Naive thymus-derived CD4-positive, alpha-beta T cell (primary cell): ENCODE measurements at regions of chr1 and their contacts with region 1.

Region 1: GRCh38 chr1:172532700-172533509 is at the start of gene SUCO:
- DNase-seq: peak; percentile 97 to 100 (median 99)
- ATAC-seq: peak; percentile 90
- H3K4me3 ChIP-seq: peak within 1 kb of the TSS; percentile 98
- H3K4me3 Mint-ChIP-seq: peak within 1 kb of the TSS; percentile 90 to 100 (median 98)
- H3K27ac ChIP-seq: peak within 1 kb of the TSS; percentile 99
- H3K27ac Mint-ChIP-seq: peak within 1 kb of the TSS; percentile 99 to 100 (median 100)
- H3K4me1 ChIP-seq: peaks cover 30 to 34% of the 10 kb centered on the region in 2 donors
- H3K4me1 Mint-ChIP-seq: peaks cover 32 to 60% (median 49%) of the 10 kb centered on the region in 7 donors
- H3K27me3 ChIP-seq: no peaks in the 10 kb centered on the region
- H3K27me3 Mint-ChIP-seq: peaks cover 0 to 16% (median 4%) of the 10 kb centered on the region in 5 donors
- total RNA-seq, gene SUCO: 52.0 to 95.0 (median 77.0) TPM

Region 2: GRCh38 chr1:171741872-171742576 is 790.9 kb before region 1 on chr1 and contains the start of gene VAMP4:
- CTCF ChIA-PET with region 1: no interaction called
- POLR2A ChIA-PET with region 1: interaction called, 4 read pairs
- intact Hi-C with region 1: loop called (anchors 1 kb)
- DNase-seq: peak; percentile 78 to 90 (median 87)
- ATAC-seq: peak; percentile 90
- H3K4me3 ChIP-seq: peak within 1 kb of the TSS; percentile 95
- H3K4me3 Mint-ChIP-seq: peak within 1 kb of the TSS; percentile 97 to 100 (median 99)
- H3K27ac ChIP-seq: peak within 1 kb of the TSS; percentile 95
- H3K27ac Mint-ChIP-seq: peak within 1 kb of the TSS; percentile 98 to 100 (median 100)
- H3K4me1 ChIP-seq: peaks cover 30 to 34% of the 10 kb centered on the region in 2 donors
- H3K4me1 Mint-ChIP-seq: peaks cover 25 to 62% (median 57%) of the 10 kb centered on the region in 7 donors
- H3K27me3 ChIP-seq: no peaks in the 10 kb centered on the region
- H3K27me3 Mint-ChIP-seq: no peaks in the 10 kb centered on the region
- total RNA-seq, gene VAMP4: 16.2 to 27.2 (median 19.7) TPM

Region 3: DNA sequence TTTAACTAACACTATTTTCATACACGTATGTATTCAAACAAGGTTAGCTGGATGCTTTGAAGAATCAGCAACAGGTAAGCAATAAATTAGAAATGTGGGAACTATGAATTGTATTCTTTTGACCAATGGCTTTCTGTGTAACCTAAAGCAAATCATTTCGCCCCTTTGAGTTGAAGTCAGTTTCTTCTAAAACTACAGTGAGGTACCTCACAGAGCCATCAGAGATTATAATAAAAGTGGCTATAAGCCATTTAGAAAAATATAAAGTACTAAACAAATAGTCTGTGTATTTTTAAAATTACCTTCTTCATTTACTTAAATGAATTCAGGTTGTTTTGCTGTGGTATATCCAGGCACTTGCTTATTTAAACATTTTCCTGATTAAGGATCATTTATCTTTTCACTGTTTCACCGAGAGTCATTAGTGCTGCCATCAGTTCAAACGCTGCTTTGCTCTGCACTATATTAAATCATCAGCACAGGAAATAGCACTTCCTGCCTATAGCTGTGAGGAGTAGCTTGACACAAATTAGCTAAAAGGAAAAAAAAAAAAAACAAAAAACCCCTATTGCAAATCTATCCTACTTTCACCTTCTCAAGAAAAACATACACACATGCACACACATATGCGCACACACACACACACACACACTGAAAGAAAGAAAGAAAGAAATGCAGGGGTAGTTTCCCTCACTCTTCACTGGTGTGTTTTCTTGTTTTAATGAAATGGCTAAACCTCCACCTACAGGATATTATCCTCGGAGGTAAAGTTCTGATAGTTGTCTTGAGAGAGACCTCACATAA is 152.3 kb before region 1 on chr1:
- CTCF ChIA-PET with region 1: no interaction called
- POLR2A ChIA-PET with region 1: interaction called, 3 read pairs
- intact Hi-C with region 1: loop called in 1 of 2 experiments (anchors 1 kb)
- DNase-seq: peak in 7 of 9 donors; percentile 49 to 82 (median 70)
- ATAC-seq: peak; percentile 96
- H3K4me3 ChIP-seq: peak overlapping the region; percentile 32
- H3K4me3 Mint-ChIP-seq: peak overlapping the region; percentile 53 to 82 (median 76)
- H3K27ac ChIP-seq: peak overlapping the region; percentile 76
- H3K27ac Mint-ChIP-seq: peak overlapping the region; percentile 86 to 94 (median 93)
- H3K4me1 ChIP-seq: peaks cover 10 to 18% of the 10 kb centered on the region in 2 donors
- H3K4me1 Mint-ChIP-seq: peaks cover 12 to 57% (median 49%) of the 10 kb centered on the region in 7 donors
- H3K27me3 ChIP-seq: no peaks in the 10 kb centered on the region
- H3K27me3 Mint-ChIP-seq: peaks cover 0 to 3% (median 0%) of the 10 kb centered on the region in 5 donors

Region 4: DNA sequence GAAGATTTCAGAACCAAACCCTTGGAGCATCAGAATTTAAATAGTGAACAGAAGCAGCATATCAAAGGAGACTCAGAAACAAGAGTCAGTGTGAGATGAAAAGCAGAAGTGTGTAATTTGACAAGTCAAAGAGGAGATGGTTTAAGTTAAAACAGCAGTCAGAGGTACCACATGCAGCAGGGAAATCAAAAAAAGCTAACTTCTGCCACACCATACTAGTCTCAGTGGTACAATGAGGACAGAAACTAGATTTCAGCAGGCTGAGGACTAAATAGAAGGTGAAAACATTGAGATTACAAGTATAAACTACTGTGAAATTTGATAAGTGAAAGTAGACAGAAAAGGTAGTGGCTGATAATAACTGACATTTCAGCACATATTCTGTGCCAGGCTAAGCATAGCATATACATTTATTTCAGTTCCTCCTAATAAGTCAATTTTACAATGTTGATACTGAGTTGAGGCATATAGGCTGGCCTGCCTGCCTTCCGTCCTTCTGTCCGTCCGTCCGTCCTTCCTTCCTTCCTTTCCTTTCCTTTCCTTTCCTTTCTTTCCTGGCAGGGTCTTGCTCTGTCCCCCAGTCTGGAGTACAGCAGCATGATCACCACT is 12.6 kb after region 1 on chr1:
- CTCF ChIA-PET with region 1: interaction called, 5 read pairs
- POLR2A ChIA-PET with region 1: interaction called, 8 read pairs
- intact Hi-C with region 1: loop called in 1 of 2 experiments (anchors 1 kb)
- DNase-seq: no peak
- ATAC-seq: peak; percentile 38
- H3K4me3 ChIP-seq: no peak overlapping the region
- H3K4me3 Mint-ChIP-seq: no peak overlapping the region
- H3K27ac ChIP-seq: no peak overlapping the region
- H3K27ac Mint-ChIP-seq: no peak overlapping the region
- H3K4me1 ChIP-seq: peaks cover 18 to 25% of the 10 kb centered on the region in 2 donors
- H3K4me1 Mint-ChIP-seq: peaks cover 17 to 50% (median 40%) of the 10 kb centered on the region in 7 donors
- H3K27me3 ChIP-seq: no peaks in the 10 kb centered on the region
- H3K27me3 Mint-ChIP-seq: no peaks in the 10 kb centered on the region

Region 5: DNA sequence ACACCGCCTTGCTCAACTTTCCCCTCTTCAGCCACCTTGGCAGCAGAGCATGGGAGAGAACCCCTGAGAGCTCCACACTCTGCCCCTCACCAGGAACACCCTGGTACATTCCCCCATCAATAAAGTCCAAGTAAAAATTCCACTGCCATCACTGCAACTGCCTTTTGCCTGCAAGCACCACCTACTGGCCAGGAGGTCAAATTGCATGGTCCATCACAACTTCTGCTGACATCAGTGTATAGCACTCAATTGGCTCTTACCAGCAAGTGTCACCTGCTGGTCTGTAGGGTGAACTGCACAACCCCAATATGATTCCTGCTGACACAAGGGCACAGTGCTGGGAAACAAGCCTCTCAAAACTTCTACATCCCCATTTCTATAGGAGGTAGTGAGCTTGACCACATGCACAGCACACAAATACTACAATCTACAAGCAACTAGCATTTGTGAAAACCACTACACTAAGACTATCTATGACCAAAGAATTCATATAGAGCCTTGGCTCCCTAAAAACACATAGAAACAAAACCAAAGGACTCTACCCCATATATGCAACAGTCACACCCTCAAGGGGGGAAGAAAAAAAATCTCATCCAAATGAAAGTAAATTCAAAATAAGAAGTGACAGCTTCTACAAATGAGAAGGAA is 195.2 kb after region 1 on chr1:
- CTCF ChIA-PET with region 1: no interaction called
- POLR2A ChIA-PET with region 1: no interaction called
- intact Hi-C with region 1: loop called in 1 of 2 experiments (anchors 2 kb)
- DNase-seq: peak in 6 of 9 donors; percentile 23 to 42 (median 38)
- ATAC-seq: peak; percentile 88
- H3K4me3 ChIP-seq: no peak overlapping the region
- H3K4me3 Mint-ChIP-seq: no peak overlapping the region
- H3K27ac ChIP-seq: no peak overlapping the region
- H3K27ac Mint-ChIP-seq: peak overlapping the region in 1 of 9 donors; percentile 1
- H3K4me1 ChIP-seq: peaks cover 0 to 6% of the 10 kb centered on the region in 2 donors
- H3K4me1 Mint-ChIP-seq: peaks cover 7 to 25% (median 15%) of the 10 kb centered on the region in 7 donors
- H3K27me3 ChIP-seq: no peaks in the 10 kb centered on the region
- H3K27me3 Mint-ChIP-seq: peaks cover 0 to 42% (median 0%) of the 10 kb centered on the region in 5 donors

Region 6: GRCh38 chr1:173867753-173868265 is 1334.9 kb after region 1 on chr1 and contains the start of gene GAS5:
- CTCF ChIA-PET with region 1: no interaction called
- POLR2A ChIA-PET with region 1: interaction called, 3 read pairs
- intact Hi-C with region 1: loop called in 1 of 2 experiments (anchors 1 kb)
- DNase-seq: peak; percentile 88 to 100 (median 99)
- ATAC-seq: peak; percentile 92
- H3K4me3 ChIP-seq: peak within 1 kb of the TSS; percentile 88
- H3K4me3 Mint-ChIP-seq: peak within 1 kb of the TSS; percentile 92 to 98 (median 95)
- H3K27ac ChIP-seq: peak within 1 kb of the TSS; percentile 93
- H3K27ac Mint-ChIP-seq: peak within 1 kb of the TSS; percentile 85 to 99 (median 97)
- H3K4me1 ChIP-seq: peaks cover 42 to 62% of the 10 kb centered on the region in 2 donors
- H3K4me1 Mint-ChIP-seq: peaks cover 50 to 80% (median 66%) of the 10 kb centered on the region in 7 donors
- H3K27me3 ChIP-seq: no peaks in the 10 kb centered on the region
- H3K27me3 Mint-ChIP-seq: peaks cover 0 to 4% (median 0%) of the 10 kb centered on the region in 5 donors
- total RNA-seq, gene GAS5: 371 to 954 (median 885) TPM